ENCODE measurements at regions of chr1 and their contacts with region 1.

Region 1: GRCh38 chr1:94335950-94336349 is 82.2 kb upstream of the ABCD3 start:
- DNase-seq: peak in 3 of 4 donors; percentile 45 to 90 (median 72)
- ATAC-seq: peak; percentile 96
- H3K4me3 ChIP-seq: no peak overlapping the region
- H3K27ac ChIP-seq: no peak overlapping the region
- H3K4me1 ChIP-seq: peaks cover 5 to 19% of the 10 kb centered on the region in 2 donors
- H3K27me3 ChIP-seq: no peaks in the 10 kb centered on the region
- CTCF ChIP-seq: peak; percentile 66 to 69

Region 2: DNA sequence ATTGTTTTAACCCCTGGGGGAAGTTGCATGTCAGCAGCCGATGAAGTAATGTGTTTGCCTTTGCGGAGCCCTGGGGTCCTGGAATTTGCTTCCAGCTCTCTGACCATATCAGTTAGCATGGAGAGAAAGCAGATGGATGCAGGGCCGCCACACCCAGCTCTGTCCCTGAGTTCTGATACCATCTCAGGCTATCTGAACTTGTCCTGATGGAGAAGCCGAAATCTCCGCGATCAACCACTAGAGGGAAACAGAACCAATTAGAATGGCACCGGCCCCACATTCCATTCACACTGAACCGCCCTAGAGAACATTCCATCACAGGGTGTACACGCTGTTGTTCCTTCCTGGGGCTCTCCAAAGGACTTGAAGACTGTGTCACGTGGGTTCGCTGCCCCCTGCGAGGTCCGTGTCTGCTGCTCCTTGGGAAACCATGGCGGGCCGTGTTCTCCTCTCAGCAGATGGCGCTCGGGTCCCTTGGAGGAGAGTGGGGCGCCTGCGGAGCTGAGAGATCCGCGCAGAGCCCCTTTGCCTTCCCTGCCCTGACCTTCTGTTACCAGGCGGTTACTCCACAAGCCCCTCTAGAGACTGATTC is 290.4 kb before region 1 on chr1:
- intact Hi-C with region 1: loop called in 1 of 2 experiments (anchors 5 kb)
- DNase-seq: peak; percentile 77 to 93 (median 88)
- ATAC-seq: peak; percentile 92
- H3K4me3 ChIP-seq: no peak overlapping the region
- H3K27ac ChIP-seq: peak overlapping the region; percentile 78 to 79
- H3K4me1 ChIP-seq: peaks cover 12 to 47% of the 10 kb centered on the region in 2 donors
- H3K27me3 ChIP-seq: no peaks in the 10 kb centered on the region
- CTCF ChIP-seq: peak; percentile 59 to 71